ENCODE measurements at regions of chr6 and their contacts with region 1.

Region 1: DNA sequence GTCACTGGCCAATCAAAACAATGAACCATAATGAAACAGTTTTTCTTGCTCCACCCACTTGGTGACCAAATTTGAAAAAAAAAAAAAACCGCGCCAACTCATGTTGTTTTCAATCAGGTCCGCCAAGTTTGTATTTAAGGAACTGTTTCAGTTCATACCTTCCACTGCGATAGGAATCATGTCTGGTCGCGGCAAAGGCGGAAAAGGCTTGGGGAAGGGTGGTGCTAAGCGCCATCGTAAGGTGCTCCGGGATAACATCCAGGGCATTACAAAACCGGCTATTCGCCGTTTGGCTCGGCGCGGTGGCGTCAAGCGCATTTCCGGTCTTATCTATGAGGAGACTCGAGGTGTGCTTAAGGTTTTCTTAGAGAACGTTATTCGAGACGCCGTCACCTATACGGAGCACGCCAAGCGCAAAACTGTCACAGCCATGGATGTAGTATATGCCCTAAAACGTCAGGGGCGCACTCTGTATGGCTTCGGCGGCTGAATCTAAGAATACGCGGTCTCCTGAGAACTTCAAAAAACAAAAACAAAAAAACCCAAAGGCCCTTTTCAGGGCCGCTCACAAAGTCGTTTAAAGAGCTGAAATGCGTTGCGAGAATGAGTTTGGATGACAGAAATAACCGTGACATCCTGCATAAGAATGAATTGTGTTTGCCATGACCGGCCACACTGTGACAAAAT is 16.7 kb downstream of the HFE start:
- DNase-seq: peak; percentile 93
- H3K4me3 Mint-ChIP-seq: peak overlapping the region; percentile 80
- H3K27ac Mint-ChIP-seq: peak overlapping the region; percentile 99
- H3K4me1 Mint-ChIP-seq: peaks cover 23% of the 10 kb centered on the region
- H3K27me3 Mint-ChIP-seq: no peaks in the 10 kb centered on the region

Region 2: DNA sequence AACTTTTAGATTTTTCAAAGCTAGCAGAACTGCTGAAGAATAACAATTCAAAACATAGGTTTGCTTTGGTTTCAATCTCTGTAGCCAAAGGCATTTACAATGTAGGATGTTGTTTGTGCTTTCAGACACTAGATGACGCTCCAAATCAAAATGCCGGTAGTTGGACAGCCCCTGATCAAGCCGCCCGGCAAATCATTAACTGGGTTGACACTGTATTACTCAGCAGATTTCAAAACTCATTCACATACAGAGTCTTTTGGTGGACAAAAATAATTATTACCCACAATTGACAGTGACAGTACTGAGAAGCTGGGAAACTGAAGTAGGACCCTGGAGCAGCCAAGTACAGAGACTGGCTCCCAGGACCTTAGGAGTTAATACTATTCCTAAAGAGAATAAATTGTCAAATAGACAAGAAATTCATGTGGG is 37.9 kb before region 1 on chr6:
- CTCF ChIA-PET with region 1: interaction called, 353 read pairs
- POLR2A ChIA-PET with region 1: interaction called, 69 read pairs
- DNase-seq: peak; percentile 64
- H3K4me3 Mint-ChIP-seq: no peak overlapping the region
- H3K27ac Mint-ChIP-seq: no peak overlapping the region
- H3K4me1 Mint-ChIP-seq: peaks cover 9% of the 10 kb centered on the region
- H3K27me3 Mint-ChIP-seq: peaks cover 29% of the 10 kb centered on the region

Region 3: DNA sequence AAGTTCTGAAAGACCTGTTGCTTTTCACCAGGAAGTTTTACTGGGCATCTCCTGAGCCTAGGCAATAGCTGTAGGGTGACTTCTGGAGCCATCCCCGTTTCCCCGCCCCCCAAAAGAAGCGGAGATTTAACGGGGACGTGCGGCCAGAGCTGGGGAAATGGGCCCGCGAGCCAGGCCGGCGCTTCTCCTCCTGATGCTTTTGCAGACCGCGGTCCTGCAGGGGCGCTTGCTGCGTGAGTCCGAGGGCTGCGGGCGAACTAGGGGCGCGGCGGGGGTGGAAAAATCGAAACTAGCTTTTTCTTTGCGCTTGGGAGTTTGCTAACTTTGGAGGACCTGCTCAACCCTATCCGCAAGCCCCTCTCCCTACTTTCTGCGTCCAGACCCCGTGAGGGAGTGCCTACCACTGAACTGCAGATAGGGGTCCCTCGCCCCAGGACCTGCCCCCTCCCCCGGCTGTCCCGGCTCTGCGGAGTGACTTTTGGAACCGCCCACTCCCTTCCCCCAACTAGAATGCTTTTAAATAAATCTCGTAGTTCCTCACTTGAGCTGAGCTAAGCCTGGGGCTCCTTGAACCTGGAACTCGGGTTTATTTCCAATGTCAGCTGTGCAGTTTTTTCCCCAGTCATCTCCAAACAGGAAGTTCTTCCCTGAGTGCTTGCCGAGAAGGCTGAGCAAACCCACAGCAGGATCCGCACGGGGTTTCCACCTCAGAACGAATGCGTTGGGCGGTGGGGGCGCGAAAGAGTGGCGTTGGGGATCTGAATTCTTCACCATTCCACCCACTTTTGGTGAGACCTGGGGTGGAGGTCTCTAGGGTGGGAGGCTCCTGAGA is 16.4 kb before region 1 on chr6 and contains the start of gene HFE:
- CTCF ChIA-PET with region 1: interaction called, 41 read pairs
- POLR2A ChIA-PET with region 1: interaction called, 32 read pairs
- DNase-seq: peak; percentile 37
- H3K4me3 Mint-ChIP-seq: peak within 1 kb of the TSS; percentile 77
- H3K27ac Mint-ChIP-seq: peak within 1 kb of the TSS; percentile 47
- H3K4me1 Mint-ChIP-seq: peaks cover 37% of the 10 kb centered on the region
- H3K27me3 Mint-ChIP-seq: peaks cover 8% of the 10 kb centered on the region
- total RNA-seq, gene HFE: 3.1 to 3.4 TPM

Region 4: DNA sequence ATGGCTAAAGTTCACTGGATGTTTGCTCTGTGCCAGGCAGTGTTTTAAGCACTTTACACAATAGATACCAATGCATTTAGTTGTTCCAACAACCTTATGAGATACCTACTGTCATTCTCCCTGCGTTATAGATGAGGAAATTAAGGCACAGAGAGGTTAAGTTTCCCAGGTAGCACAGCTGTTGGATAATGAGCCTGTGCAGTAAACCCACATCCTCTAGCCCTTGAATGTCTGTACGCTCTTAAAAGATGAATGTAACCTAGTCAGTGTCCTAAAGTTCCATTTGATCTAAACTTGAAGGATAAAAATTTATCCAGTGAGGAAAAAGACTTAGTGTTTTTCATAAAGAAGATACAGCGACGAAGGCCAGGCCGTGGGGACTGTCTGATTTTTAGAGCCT is 11.3 kb after region 1 on chr6:
- CTCF ChIA-PET with region 1: interaction called, 8 read pairs
- POLR2A ChIA-PET with region 1: interaction called, 31 read pairs
- DNase-seq: no peak
- H3K4me3 Mint-ChIP-seq: no peak overlapping the region
- H3K27ac Mint-ChIP-seq: no peak overlapping the region
- H3K4me1 Mint-ChIP-seq: peaks cover 12% of the 10 kb centered on the region
- H3K27me3 Mint-ChIP-seq: peaks cover 4% of the 10 kb centered on the region

Region 5: GRCh38 chr6:26175428-26176181 is 71.7 kb after region 1 on chr6:
- CTCF ChIA-PET with region 1: interaction called, 3 read pairs
- POLR2A ChIA-PET with region 1: interaction called, 13 read pairs
- DNase-seq: peak; percentile 68
- H3K4me3 Mint-ChIP-seq: peak overlapping the region; percentile 5
- H3K27ac Mint-ChIP-seq: peak overlapping the region; percentile 50
- H3K4me1 Mint-ChIP-seq: peaks cover 44% of the 10 kb centered on the region
- H3K27me3 Mint-ChIP-seq: no peaks in the 10 kb centered on the region

Region 6: GRCh38 chr6:26183581-26184366 is 79.9 kb after region 1 on chr6:
- CTCF ChIA-PET with region 1: no interaction called
- POLR2A ChIA-PET with region 1: interaction called, 21 read pairs
- DNase-seq: peak; percentile 78
- H3K4me3 Mint-ChIP-seq: peak overlapping the region; percentile 75
- H3K27ac Mint-ChIP-seq: peak overlapping the region; percentile 92
- H3K4me1 Mint-ChIP-seq: peaks cover 71% of the 10 kb centered on the region
- H3K27me3 Mint-ChIP-seq: no peaks in the 10 kb centered on the region